Heart right ventricle (tissue), 16 donors: ENCODE measurements at regions of chr9 and their contacts with region 1.

Region 1: GRCh38 chr9:72827950-72828731 is 124.7 kb downstream of the ALDH1A1 start:
- DNase-seq: no peak
- ATAC-seq: peak in 1 of 8 donors; percentile 25
- H3K4me3 ChIP-seq: no peak overlapping the region
- H3K27ac ChIP-seq: peak overlapping the region in 6 of 10 donors; percentile 8 to 70 (median 46)
- H3K4me1 ChIP-seq: peaks cover 0 to 17% (median 0%) of the 10 kb centered on the region in 9 donors
- H3K27me3 ChIP-seq: no peaks in the 10 kb centered on the region
- CTCF ChIP-seq: no peak

Region 2: DNA sequence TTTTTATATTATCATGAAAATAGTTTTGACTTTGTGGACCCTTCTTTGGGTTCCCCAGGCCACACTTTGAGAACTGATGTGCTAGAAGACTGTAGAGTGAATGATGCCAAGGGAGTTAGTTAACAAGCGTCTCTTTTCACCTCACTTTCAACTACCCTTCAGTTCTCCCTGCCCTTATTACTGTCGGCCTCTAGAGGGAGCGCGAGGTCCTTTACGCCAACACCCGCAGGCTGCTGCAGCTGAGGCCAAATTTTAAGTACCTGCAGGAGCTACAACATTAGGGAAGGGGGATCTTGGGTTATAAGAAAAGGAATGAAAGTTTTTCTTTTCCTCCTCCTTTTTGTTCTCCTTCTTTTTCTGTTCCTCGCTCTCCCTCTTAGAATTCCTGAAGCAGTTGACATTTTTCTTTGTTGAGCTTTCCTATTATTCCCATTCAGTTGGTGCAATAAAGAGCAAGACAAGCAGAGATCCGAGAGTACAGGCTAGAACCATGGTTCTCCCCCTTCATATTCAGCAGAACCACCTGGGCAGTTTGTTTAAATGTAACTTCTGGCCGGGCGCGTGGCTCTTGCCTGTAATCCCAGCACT is 547.1 kb before region 1 on chr9:
- intact Hi-C with region 1: loop called in 7 of 10 experiments (anchors 2 to 5 kb)
- DNase-seq: peak; percentile 62 to 66
- ATAC-seq: peak; percentile 62 to 94 (median 84)
- H3K4me3 ChIP-seq: no peak overlapping the region
- H3K27ac ChIP-seq: no peak overlapping the region
- H3K4me1 ChIP-seq: no peaks in the 10 kb centered on the region
- H3K27me3 ChIP-seq: no peaks in the 10 kb centered on the region
- CTCF ChIP-seq: peak; percentile 90 to 97 (median 94)

Region 3: DNA sequence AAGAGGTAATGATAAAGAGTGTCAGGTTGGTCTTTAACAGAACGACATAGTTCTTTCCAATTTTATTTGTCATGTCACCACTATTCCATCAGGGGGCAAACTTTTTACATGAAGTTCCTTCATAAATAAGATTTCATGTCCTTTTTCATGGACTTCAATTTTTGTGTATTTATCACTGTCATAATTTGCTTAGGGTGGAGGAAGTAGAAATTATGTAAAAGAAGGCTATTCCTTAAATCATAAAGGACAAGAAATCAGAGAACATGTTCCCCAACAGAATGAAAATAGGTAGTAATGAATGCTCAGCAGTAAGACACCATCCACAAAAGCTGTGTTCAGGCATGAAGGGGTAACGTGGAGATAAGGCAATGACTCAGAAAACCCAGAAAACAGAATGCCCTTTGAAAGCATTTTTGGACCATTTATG is 535.9 kb before region 1 on chr9:
- intact Hi-C with region 1: loop called in 1 of 10 experiments (anchors 5 kb)
- DNase-seq: no peak
- ATAC-seq: peak in 3 of 8 donors; percentile 30 to 51 (median 44)
- H3K4me3 ChIP-seq: no peak overlapping the region
- H3K27ac ChIP-seq: peak overlapping the region in 1 of 10 donors; percentile 68
- H3K4me1 ChIP-seq: peaks cover 0 to 33% (median 8%) of the 10 kb centered on the region in 9 donors
- H3K27me3 ChIP-seq: no peaks in the 10 kb centered on the region
- CTCF ChIP-seq: peak; percentile 44 to 79 (median 65)

Region 4: GRCh38 chr9:72680593-72681282 is 147.4 kb before region 1 on chr9:
- intact Hi-C with region 1: no loop called
- DNase-seq: no peak
- ATAC-seq: no peak
- H3K4me3 ChIP-seq: no peak overlapping the region
- H3K27ac ChIP-seq: no peak overlapping the region
- H3K4me1 ChIP-seq: no peaks in the 10 kb centered on the region
- H3K27me3 ChIP-seq: no peaks in the 10 kb centered on the region
- CTCF ChIP-seq: no peak

Region 5: GRCh38 chr9:72779614-72780013 is 48.5 kb before region 1 on chr9:
- intact Hi-C with region 1: no loop called
- DNase-seq: no peak
- ATAC-seq: no peak
- H3K4me3 ChIP-seq: no peak overlapping the region
- H3K27ac ChIP-seq: no peak overlapping the region
- H3K4me1 ChIP-seq: no peaks in the 10 kb centered on the region
- H3K27me3 ChIP-seq: no peaks in the 10 kb centered on the region
- CTCF ChIP-seq: no peak

Region 6: DNA sequence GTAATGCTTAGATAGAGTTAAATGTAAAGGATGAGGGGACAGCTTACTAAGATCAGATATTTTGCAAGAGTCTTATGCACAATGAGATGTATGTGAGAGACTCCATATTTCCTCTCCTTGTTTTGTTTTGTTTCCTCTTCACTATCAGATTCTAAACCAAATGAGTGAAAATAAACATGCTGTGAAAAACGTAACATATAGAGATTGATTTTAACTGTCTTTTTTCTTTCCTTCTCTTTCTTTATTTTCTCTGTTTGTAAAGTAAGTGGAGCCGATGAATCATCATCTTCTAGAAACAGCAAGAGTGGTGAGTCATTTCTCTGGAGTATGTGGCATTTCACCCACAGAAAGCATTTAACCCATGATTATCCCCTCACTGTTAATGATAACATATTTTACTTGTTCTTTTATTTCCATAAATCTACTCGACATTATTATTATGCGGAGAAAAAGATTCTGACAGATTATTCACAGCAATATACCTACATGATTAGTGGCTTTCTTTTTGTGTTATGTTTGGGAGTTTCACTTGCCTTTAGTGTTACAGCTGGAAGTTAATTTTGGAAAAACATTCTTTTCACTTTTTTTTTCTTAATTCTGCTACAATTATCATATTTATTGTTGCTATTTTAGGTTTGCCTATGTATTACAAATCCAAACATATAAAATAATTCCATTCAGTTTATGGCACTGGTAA is 321.4 kb after region 1 on chr9:
- intact Hi-C with region 1: no loop called
- DNase-seq: no peak
- ATAC-seq: peak in 4 of 8 donors; percentile 40 to 67 (median 44)
- H3K4me3 ChIP-seq: peak overlapping the region in 3 of 10 donors; percentile 2 to 16 (median 13)
- H3K27ac ChIP-seq: peak overlapping the region in 8 of 10 donors; percentile 1 to 84 (median 52)
- H3K4me1 ChIP-seq: peaks cover 0 to 62% (median 26%) of the 10 kb centered on the region in 9 donors
- H3K27me3 ChIP-seq: no peaks in the 10 kb centered on the region
- CTCF ChIP-seq: no peak